Left ventricle myocardium inferior (tissue), 1 donor: ENCODE measurements at regions of chr10 and their contacts with region 1.

Region 1: GRCh38 chr10:62816331-62817120 is at the start of gene EGR2:
- DNase-seq: peak; percentile 93
- H3K4me3 ChIP-seq: peak within 1 kb of the TSS; percentile 87
- H3K27ac ChIP-seq: peak within 1 kb of the TSS; percentile 91
- H3K4me1 ChIP-seq: peaks cover 52% of the 10 kb centered on the region
- H3K27me3 ChIP-seq: peaks cover 66% of the 10 kb centered on the region
- CTCF ChIP-seq: no peak
- total RNA-seq, gene EGR2: 0.52 TPM

Region 2: GRCh38 chr10:62610649-62611229 is 205.8 kb before region 1 on chr10:
- intact Hi-C with region 1: loop called (anchors 5 kb)
- DNase-seq: peak; percentile 33
- H3K4me3 ChIP-seq: no peak overlapping the region
- H3K27ac ChIP-seq: no peak overlapping the region
- H3K4me1 ChIP-seq: no peaks in the 10 kb centered on the region
- H3K27me3 ChIP-seq: peaks cover 27% of the 10 kb centered on the region
- CTCF ChIP-seq: peak; percentile 81

Region 3: GRCh38 chr10:62755662-62756653 is 60.6 kb before region 1 on chr10:
- intact Hi-C with region 1: no loop called
- DNase-seq: no peak
- H3K4me3 ChIP-seq: no peak overlapping the region
- H3K27ac ChIP-seq: no peak overlapping the region
- H3K4me1 ChIP-seq: peaks cover 14% of the 10 kb centered on the region
- H3K27me3 ChIP-seq: no peaks in the 10 kb centered on the region
- CTCF ChIP-seq: no peak

Region 4: GRCh38 chr10:62907470-62908212 is 91.1 kb after region 1 on chr10:
- intact Hi-C with region 1: no loop called
- DNase-seq: no peak
- H3K4me3 ChIP-seq: no peak overlapping the region
- H3K27ac ChIP-seq: no peak overlapping the region
- H3K4me1 ChIP-seq: no peaks in the 10 kb centered on the region
- H3K27me3 ChIP-seq: peaks cover 64% of the 10 kb centered on the region
- CTCF ChIP-seq: no peak